Heart right ventricle (tissue), 16 donors: ENCODE measurements at regions of chr10 and their contacts with region 1.

Region 1: GRCh38 chr10:55104738-55105137 is 303.7 kb upstream of the PCDH15 start:
- DNase-seq: no peak
- ATAC-seq: no peak
- H3K4me3 ChIP-seq: no peak overlapping the region
- H3K27ac ChIP-seq: no peak overlapping the region
- H3K4me1 ChIP-seq: no peaks in the 10 kb centered on the region
- H3K27me3 ChIP-seq: no peaks in the 10 kb centered on the region
- CTCF ChIP-seq: no peak

Region 2: DNA sequence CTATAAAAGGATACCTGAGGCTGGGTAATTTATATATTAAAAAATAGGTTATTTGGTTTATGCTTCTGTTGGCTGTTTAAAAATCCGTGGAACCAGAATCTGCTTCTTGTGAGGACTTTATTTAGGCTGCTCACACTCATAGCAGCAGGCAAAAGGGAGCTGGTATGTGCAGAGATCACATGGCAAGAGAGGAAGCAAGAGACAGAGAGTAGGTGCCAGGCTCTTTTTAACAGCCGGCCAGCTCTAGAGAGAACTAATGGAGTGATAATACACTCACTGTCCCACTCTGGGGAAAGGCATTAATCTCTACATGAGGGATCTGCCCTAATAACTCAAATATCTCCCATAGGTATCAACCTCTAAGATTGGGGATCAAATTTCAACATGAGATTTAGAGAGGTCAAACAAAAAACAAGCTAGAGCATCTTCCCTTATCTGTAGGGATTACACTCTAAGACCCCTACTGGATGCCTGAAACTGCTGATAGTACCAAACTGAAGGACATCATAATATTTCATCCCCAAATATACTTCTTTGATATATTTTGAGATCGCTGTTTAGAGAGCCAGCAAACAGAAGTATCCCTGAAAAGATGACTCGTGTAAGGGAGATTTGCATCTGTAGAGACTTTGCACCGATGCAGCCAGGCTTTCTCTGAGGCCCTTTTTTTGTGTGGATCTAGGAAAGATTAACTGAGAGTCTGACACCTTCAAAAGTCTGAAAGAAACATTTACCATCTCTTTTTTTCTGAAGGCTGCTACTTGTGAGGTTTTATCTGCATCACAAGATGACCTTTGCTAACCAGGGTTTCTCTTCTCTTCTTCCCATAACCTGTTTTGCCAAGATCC is 1615.2 kb before region 1 on chr10:
- intact Hi-C with region 1: no loop called
- DNase-seq: peak in 1 of 2 donors; percentile 13
- ATAC-seq: peak; percentile 65 to 90 (median 80)
- H3K4me3 ChIP-seq: no peak overlapping the region
- H3K27ac ChIP-seq: peak overlapping the region in 1 of 10 donors; percentile 41
- H3K4me1 ChIP-seq: peaks cover 0 to 5% (median 0%) of the 10 kb centered on the region in 9 donors
- H3K27me3 ChIP-seq: no peaks in the 10 kb centered on the region
- CTCF ChIP-seq: no peak

Region 3: DNA sequence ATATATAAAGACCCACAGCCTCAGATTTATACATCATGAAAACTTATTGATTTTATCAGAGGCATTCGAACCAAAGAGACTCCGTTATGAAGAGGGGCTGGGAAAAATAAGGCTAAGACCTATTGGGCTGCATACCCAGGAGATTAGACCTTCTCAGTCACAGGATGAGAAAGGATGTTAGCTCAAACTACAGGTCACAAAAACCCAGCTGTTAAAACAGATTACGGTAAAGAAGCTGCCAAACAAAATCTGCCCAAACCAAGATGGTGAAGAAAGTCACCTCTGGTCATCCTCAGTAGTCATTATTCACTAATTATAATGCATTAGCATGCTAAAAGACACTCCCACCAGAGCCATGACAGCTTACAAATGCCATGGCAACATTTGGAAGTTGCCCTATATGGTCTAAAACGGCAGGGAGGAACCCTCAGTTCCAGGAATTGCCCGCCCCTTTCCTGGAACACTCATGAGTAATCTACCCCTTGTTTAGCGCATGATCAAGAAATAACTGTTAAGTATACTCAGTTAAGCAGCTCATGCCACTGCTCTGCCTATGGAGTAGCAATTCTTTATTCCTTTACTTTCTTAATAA is 58.7 kb after region 1 on chr10:
- intact Hi-C with region 1: loop called in 1 of 10 experiments (anchors 10 kb)
- DNase-seq: no peak
- ATAC-seq: no peak
- H3K4me3 ChIP-seq: no peak overlapping the region
- H3K27ac ChIP-seq: no peak overlapping the region
- H3K4me1 ChIP-seq: no peaks in the 10 kb centered on the region
- H3K27me3 ChIP-seq: no peaks in the 10 kb centered on the region
- CTCF ChIP-seq: no peak